Activated CD8-positive, alpha-beta memory T cell treated with anti-CD3 and anti-CD28 coated beads, Interleukin-2, amount 10 ng/mL, durations not matched to agents 7 days and 5 days (primary cell): ENCODE measurements at regions of chr11 and their contacts with region 1.

Region 1: GRCh38 chr11:114180301-114181055 is 115.7 kb upstream of the NNMT start:
- DNase-seq: no peak
- ATAC-seq: no peak
- H3K4me3 Mint-ChIP-seq: no peak overlapping the region
- H3K27ac Mint-ChIP-seq: no peak overlapping the region
- H3K4me1 Mint-ChIP-seq: peaks cover 64% of the 10 kb centered on the region
- H3K27me3 Mint-ChIP-seq: no peaks in the 10 kb centered on the region

Region 2: DNA sequence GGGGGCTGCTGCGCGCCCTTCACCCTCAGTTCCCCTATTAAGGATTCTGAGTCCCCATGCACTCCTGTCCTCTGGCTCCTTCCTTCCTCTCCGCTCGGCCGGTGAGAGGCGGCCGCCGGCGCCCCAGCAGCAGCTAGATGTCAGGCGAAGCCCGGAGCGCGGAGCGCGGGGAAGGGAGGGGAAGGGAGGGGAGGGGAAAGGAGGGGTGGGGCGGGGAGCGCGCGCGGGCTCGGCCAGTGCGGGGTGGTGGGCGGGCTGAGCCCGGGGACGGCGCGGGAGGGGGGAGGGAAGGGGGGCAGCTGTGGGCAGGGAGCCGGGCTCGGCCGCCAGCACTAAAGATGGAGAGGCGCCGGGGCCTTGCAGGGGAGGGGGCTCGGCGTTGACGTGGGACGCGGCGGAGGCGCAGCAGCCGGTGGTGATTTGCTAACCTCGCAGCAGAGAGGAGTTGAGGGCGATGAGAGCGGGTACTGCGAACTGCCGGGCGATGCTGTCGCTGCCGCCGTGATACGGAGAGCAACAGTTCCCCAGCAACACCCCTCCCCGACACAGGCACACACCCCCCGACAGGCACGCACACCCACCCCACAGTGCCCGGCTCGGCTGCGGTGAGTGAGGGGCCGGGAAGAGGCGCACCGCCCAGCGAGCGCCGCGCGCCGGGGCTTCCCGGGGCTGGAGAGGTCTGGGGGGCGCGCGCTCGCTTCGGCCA is 121.0 kb before region 1 on chr11 and contains the start of gene ZBTB16:
- CTCF ChIA-PET with region 1: interaction called, 13 read pairs
- DNase-seq: no peak
- ATAC-seq: peak; percentile 54
- H3K4me3 Mint-ChIP-seq: peak within 1 kb of the TSS; percentile 74
- H3K27ac Mint-ChIP-seq: peak within 1 kb of the TSS; percentile 45
- H3K4me1 Mint-ChIP-seq: peaks cover 15% of the 10 kb centered on the region
- H3K27me3 Mint-ChIP-seq: peaks cover 75% of the 10 kb centered on the region
- total RNA-seq, gene ZBTB16: 3.2 to 3.9 TPM

Region 3: DNA sequence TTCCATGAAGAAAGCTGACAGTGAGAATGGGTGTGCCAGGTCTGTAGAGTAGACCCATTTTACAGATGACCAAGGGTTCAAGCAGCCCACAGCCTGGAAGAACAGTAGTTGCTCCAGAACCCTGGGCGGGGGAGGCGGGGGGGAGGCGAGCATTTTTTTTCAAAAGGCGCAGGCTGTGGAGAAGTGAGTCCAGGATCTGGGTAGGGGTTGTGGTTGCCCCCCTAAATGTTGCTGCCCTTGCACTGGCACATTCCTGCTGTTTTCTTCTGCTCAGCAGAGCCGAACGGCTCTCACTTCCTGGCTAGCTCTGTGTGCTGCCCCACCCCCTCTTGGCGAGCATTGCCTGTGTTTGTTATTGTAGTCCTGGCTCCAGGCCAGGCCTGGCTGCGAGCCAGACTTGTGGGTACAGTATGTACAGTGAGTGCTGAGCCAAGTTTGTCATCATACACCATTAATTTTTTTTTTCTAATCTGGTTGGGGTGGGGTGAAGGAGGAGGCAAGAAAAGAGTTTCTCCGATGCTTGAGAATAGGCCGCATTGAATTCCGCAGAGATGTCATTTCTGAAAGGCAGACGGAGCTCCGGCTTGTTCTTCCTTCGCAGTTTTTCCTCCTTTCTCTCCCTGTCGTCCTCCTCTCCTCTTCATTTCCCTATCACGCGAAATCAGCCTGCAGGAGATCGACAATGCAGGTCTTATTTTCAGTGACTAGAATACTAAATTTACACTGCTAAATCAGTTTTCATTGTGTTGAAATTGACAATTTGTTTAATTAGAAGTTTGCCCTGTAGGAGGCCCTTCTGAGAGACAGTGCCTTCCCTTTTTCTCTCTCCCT is 20.5 kb before region 1 on chr11:
- CTCF ChIA-PET with region 1: interaction called, 11 read pairs
- DNase-seq: peak; percentile 97
- ATAC-seq: peak; percentile 98
- H3K4me3 Mint-ChIP-seq: peak overlapping the region; percentile 46
- H3K27ac Mint-ChIP-seq: peak overlapping the region; percentile 87
- H3K4me1 Mint-ChIP-seq: peaks cover 38% of the 10 kb centered on the region
- H3K27me3 Mint-ChIP-seq: no peaks in the 10 kb centered on the region

Region 4: GRCh38 chr11:114166897-114167323 is 13.6 kb before region 1 on chr11:
- CTCF ChIA-PET with region 1: interaction called, 63 read pairs
- DNase-seq: no peak
- ATAC-seq: peak; percentile 77
- H3K4me3 Mint-ChIP-seq: peak overlapping the region; percentile 9
- H3K27ac Mint-ChIP-seq: peak overlapping the region; percentile 80
- H3K4me1 Mint-ChIP-seq: peaks cover 51% of the 10 kb centered on the region
- H3K27me3 Mint-ChIP-seq: no peaks in the 10 kb centered on the region

Region 5: DNA sequence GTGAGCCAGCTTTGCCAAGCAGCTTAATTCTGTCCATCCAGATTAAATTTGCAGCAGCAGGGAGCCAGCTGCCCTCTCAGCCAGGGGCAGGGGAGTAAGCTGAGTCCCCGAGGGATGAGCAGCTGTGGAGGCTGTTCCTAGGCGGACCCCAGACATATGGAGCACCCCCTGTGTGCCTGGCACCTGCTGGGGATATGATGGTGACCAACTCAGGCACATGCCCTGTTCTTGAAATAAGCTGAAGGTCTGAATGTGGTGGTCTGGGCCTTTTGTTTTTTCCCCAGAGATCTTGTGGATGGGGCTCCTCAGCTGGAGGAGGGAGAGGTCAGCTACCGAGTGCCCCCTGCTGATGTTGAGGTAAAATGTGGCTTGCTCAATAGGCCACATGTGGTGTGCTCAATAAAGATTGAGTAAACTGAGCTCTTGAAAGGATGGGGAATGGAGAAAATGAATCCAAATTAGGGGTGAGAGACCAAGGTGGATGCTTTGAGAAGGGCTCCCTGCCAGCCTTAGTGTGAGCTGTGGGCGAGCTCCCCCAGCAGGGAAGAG is 12.4 kb after region 1 on chr11:
- CTCF ChIA-PET with region 1: interaction called, 26 read pairs
- DNase-seq: no peak
- ATAC-seq: no peak
- H3K4me3 Mint-ChIP-seq: no peak overlapping the region
- H3K27ac Mint-ChIP-seq: no peak overlapping the region
- H3K4me1 Mint-ChIP-seq: peaks cover 14% of the 10 kb centered on the region
- H3K27me3 Mint-ChIP-seq: no peaks in the 10 kb centered on the region